Ascending aorta (tissue), 2 donors: ENCODE measurements at regions of chr2 and their contacts with region 1.

Region 1: GRCh38 chr2:197453161-197453914 is at the start of gene COQ10B:
- DNase-seq: peak; percentile 98 to 100
- H3K4me3 ChIP-seq: peak within 1 kb of the TSS; percentile 60 to 83
- H3K27ac ChIP-seq: peak within 1 kb of the TSS; percentile 96 to 99
- H3K4me1 ChIP-seq: peaks cover 9 to 19% of the 10 kb centered on the region in 2 donors
- H3K27me3 ChIP-seq: no peaks in the 10 kb centered on the region
- CTCF ChIP-seq: peak in 2 of 3 experiments; percentile 15 to 25
- total RNA-seq, gene COQ10B: 6.0 TPM

Region 2: GRCh38 chr2:196639180-196640030 is 813.9 kb before region 1 on chr2 and contains the start of gene CCDC150:
- intact Hi-C with region 1: loop called (anchors 5 kb)
- DNase-seq: peak; percentile 75 to 96
- H3K4me3 ChIP-seq: peak within 1 kb of the TSS; percentile 70 to 72
- H3K27ac ChIP-seq: no peak within 1 kb of the TSS
- H3K4me1 ChIP-seq: peaks cover 0 to 5% of the 10 kb centered on the region in 2 donors
- H3K27me3 ChIP-seq: no peaks in the 10 kb centered on the region
- CTCF ChIP-seq: peak; percentile 12 to 51 (median 21)
- total RNA-seq, gene CCDC150: 7.1 TPM

Region 3: GRCh38 chr2:197198890-197199289 is 254.4 kb before region 1 on chr2:
- intact Hi-C with region 1: loop called (anchors 5 kb)
- DNase-seq: peak; percentile 37 to 84
- H3K4me3 ChIP-seq: peak overlapping the region; percentile 29 to 51
- H3K27ac ChIP-seq: peak overlapping the region; percentile 75 to 80
- H3K4me1 ChIP-seq: peaks cover 17 to 54% of the 10 kb centered on the region in 2 donors
- H3K27me3 ChIP-seq: no peaks in the 10 kb centered on the region
- CTCF ChIP-seq: no peak

Region 4: DNA sequence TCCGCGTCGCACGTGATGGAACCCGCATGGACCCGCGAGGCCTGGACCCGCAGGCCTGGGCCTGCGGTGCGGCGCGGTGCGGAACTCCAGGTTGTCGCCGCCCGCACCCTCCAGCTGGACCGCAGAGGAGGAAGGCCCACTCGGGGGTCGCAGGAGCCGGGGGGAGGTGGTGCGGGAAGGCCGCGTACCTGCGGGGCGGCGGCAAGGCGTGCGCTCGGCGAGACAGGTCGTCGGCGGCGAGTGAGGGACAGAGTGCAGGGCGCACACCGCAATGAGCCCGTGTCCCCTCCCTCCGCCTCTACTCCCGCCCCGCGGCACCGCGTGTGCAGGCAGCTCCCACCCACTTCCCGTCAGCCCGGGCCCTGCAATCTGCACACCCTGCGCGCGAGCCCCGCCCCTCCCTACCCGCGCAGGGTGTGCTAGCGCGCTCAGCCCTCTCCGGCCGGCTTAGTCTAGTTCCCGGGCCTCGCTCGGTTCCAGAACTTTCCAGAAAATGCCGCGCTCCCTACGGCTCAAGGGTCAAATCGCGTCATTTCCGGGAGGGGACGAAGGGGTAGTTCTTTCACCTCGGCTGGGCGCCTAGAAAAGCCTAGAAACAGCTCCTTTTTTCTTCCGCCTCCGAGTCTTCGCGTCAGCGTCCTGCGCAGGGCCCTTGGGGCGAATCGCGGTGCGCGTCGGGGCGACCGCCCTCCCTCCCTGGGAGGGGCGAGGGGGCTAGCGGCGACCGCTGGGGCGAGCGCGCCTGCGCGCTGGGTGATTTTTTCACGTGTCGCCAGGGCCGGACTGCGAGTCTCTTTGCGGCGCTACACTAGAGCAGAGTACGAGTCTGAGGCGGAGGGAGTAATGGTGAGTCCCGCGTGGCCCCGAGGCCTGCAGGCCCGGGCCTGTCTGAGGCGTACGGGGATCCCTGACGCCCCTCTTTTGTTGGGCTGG is 46.5 kb after region 1 on chr2 and contains the starts of genes HSPD1 and HSPE1:
- intact Hi-C with region 1: loop called (anchors 1 kb)
- DNase-seq: peak; percentile 93 to 99
- H3K4me3 ChIP-seq: peak within 1 kb of the TSS; percentile 94 to 98
- H3K27ac ChIP-seq: peak within 1 kb of the TSS; percentile 97 to 98
- H3K4me1 ChIP-seq: peaks cover 11 to 42% of the 10 kb centered on the region in 2 donors
- H3K27me3 ChIP-seq: no peaks in the 10 kb centered on the region
- CTCF ChIP-seq: peak in 1 of 3 experiments; percentile 29
- total RNA-seq, gene HSPD1: 110 TPM
- total RNA-seq, gene HSPE1: 72.7 TPM

Region 5: GRCh38 chr2:197515739-197516392 is 62.5 kb after region 1 on chr2 and contains the start of gene MOB4:
- intact Hi-C with region 1: loop called (anchors 1 kb)
- DNase-seq: peak; percentile 72 to 97
- H3K4me3 ChIP-seq: peak within 1 kb of the TSS; percentile 77 to 84
- H3K27ac ChIP-seq: peak within 1 kb of the TSS; percentile 84 to 95
- H3K4me1 ChIP-seq: peaks cover 0 to 7% of the 10 kb centered on the region in 2 donors
- H3K27me3 ChIP-seq: no peaks in the 10 kb centered on the region
- CTCF ChIP-seq: peak in 1 of 3 experiments; percentile 4
- total RNA-seq, gene MOB4: 29.2 TPM

Region 6: DNA sequence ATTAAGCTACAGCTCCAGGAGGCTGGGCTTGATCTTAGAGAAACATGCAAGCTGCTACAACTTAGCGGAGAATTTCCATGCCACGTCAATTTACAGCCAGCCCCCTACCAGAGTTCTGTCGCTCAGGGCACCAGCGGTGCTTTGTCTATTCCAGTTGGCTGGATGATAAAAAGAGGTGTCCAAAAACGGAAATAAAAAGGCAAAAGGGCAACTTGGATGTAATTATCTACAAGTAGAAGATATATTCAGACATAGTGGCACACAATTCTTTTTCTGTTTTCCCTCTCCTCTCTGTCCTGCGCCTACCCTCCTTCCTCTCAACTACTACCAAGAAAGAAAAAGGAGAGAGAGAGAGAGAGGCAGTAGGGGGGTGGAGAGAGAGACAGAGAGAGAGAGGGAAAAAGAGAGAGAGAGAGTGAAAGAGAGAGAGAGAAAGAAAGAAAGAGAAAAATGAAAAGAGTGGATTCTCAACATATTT is 222.4 kb after region 1 on chr2:
- intact Hi-C with region 1: loop called (anchors 10 kb)
- DNase-seq: no peak
- H3K4me3 ChIP-seq: peak overlapping the region; percentile 48 to 65
- H3K27ac ChIP-seq: peak overlapping the region; percentile 68 to 85
- H3K4me1 ChIP-seq: peaks cover 0 to 10% of the 10 kb centered on the region in 2 donors
- H3K27me3 ChIP-seq: no peaks in the 10 kb centered on the region
- CTCF ChIP-seq: no peak

Region 7: DNA sequence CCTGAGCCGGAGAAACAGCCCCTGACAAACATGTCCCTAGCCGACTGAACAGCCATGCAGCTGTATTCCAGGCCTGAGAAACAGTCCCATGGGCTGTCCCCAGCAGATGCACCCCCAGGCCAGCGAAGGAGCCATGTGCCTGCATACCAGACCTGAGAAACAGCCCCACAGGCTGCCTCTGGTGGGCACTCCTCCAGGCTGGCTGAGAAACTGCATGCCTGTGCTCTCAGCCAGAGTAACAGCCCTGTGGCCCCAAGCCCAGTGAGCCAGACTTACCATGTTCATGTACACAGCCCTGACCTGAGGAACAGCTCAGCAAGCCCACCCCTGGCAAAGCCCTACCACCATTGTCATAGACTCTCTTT is 306.9 kb after region 1 on chr2:
- intact Hi-C with region 1: no loop called
- DNase-seq: no peak
- H3K4me3 ChIP-seq: no peak overlapping the region
- H3K27ac ChIP-seq: no peak overlapping the region
- H3K4me1 ChIP-seq: no peaks in the 10 kb centered on the region
- H3K27me3 ChIP-seq: no peaks in the 10 kb centered on the region
- CTCF ChIP-seq: no peak